Vagina (tissue), 2 donors: ENCODE measurements at regions of chr4 and their contacts with region 1.

Region 1: GRCh38 chr4:126306152-126306869 is 991.6 kb downstream of the FAT4 start:
- DNase-seq: no peak
- H3K4me3 ChIP-seq: no peak overlapping the region
- H3K27ac ChIP-seq: no peak overlapping the region
- H3K4me1 ChIP-seq: no peaks in the 10 kb centered on the region
- H3K27me3 ChIP-seq: no peaks in the 10 kb centered on the region
- CTCF ChIP-seq: no peak
- POLR2A ChIP-seq: no peak

Region 2: GRCh38 chr4:126318376-126318775 is 12.1 kb after region 1 on chr4:
- intact Hi-C with region 1: no loop called
- DNase-seq: no peak
- H3K4me3 ChIP-seq: no peak overlapping the region
- H3K27ac ChIP-seq: no peak overlapping the region
- H3K4me1 ChIP-seq: no peaks in the 10 kb centered on the region
- H3K27me3 ChIP-seq: no peaks in the 10 kb centered on the region
- CTCF ChIP-seq: no peak
- POLR2A ChIP-seq: no peak

Region 3: DNA sequence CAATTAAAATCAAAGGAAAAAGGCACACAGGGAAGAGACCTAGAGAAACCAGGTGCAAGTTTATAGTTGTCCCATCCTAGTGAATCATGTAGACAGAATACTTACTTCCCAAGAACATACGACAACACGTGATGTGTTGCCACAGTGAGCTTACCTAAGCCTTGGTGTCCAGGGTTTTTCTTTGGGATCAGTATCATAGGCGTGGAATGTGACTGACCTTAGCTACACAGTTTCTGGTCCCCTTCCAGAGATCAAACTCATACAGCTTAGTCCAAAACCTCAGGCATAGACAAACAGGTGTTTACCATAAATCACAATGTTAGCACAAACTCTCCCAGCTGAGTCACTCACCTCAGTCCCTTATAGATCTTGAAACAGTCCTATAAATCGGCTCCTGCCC is 1441.6 kb after region 1 on chr4:
- intact Hi-C with region 1: loop called (anchors 5 kb)
- DNase-seq: no peak
- H3K4me3 ChIP-seq: no peak overlapping the region
- H3K27ac ChIP-seq: no peak overlapping the region
- H3K4me1 ChIP-seq: no peaks in the 10 kb centered on the region
- H3K27me3 ChIP-seq: no peaks in the 10 kb centered on the region
- CTCF ChIP-seq: no peak
- POLR2A ChIP-seq: no peak